ENCODE measurements at regions of chr10 and their contacts with region 1.

Region 1: DNA sequence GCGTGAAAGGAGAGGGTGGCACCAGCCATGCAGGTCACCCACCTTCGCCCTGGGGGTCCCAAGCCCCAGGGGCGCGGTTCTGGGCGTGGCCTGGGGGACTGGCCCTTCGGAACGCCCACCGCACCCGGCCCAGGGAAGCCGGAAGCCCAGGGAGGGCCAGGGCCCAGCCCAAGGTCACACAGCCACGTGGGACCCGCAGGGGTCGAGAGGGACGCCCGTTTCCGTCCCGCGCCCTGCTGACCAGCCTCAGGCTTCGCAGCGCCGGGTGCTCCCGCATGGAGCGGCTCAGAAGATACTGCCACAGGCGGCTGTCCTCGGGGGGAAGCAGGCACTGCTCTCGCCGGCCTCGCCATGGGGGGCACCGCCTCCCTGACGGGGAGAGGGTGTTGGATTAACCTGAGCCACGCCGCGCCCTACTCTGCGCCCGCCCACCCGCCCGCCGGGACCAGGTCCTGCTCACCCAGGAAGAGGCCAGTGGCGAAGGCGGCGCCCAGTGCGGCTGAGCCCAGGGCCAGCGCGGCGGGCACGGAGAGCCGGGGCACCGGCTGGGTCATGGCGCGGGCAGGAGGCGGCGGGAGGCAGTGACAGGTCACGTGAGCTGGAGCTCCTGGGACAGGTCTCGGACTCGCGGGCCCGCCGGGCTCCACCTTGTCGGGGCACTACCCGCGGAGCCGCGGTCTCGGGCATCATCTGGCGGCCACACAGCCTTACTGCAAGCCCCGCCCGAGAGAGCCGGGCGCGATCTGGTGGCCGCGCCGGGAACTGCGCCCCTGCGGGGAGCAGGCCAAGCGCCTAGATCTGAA is at the start of gene COMTD1:
- DNase-seq: peak; percentile 96
- H3K4me3 Mint-ChIP-seq: peak within 1 kb of the TSS; percentile 82
- H3K27ac Mint-ChIP-seq: peak within 1 kb of the TSS; percentile 72
- H3K4me1 Mint-ChIP-seq: peaks cover 32% of the 10 kb centered on the region
- H3K27me3 Mint-ChIP-seq: no peaks in the 10 kb centered on the region
- total RNA-seq, gene COMTD1: 34.2 to 34.8 TPM

Region 2: DNA sequence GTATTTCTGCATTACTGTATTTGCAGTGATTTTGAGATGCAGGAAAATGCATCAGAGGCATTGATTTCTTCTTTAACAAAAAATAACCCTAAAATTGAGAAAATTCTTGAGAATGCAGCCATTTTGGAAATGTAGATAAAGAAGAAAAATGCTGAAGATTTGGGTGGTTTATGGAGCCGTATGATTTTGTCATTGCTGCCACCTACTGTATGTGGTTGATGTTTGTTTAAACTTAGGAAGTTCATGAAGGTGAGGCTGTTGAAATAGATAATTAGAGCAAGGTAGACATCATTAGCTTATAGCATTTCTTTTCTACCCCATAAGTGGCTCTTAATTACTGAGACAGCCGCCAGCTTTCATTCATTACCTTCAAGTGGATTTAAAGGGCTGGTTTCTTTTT is 216.2 kb before region 1 on chr10:
- CTCF ChIA-PET with region 1: interaction called, 20 read pairs
- POLR2A ChIA-PET with region 1: interaction called, 3 read pairs
- DNase-seq: no peak
- H3K4me3 Mint-ChIP-seq: no peak overlapping the region
- H3K27ac Mint-ChIP-seq: no peak overlapping the region
- H3K4me1 Mint-ChIP-seq: peaks cover 26% of the 10 kb centered on the region
- H3K27me3 Mint-ChIP-seq: no peaks in the 10 kb centered on the region

Region 3: GRCh38 chr10:75057680-75058079 is 177.9 kb before region 1 on chr10:
- CTCF ChIA-PET with region 1: no interaction called
- POLR2A ChIA-PET with region 1: no interaction called
- DNase-seq: no peak
- H3K4me3 Mint-ChIP-seq: no peak overlapping the region
- H3K27ac Mint-ChIP-seq: no peak overlapping the region
- H3K4me1 Mint-ChIP-seq: peaks cover 11% of the 10 kb centered on the region
- H3K27me3 Mint-ChIP-seq: no peaks in the 10 kb centered on the region

Region 4: DNA sequence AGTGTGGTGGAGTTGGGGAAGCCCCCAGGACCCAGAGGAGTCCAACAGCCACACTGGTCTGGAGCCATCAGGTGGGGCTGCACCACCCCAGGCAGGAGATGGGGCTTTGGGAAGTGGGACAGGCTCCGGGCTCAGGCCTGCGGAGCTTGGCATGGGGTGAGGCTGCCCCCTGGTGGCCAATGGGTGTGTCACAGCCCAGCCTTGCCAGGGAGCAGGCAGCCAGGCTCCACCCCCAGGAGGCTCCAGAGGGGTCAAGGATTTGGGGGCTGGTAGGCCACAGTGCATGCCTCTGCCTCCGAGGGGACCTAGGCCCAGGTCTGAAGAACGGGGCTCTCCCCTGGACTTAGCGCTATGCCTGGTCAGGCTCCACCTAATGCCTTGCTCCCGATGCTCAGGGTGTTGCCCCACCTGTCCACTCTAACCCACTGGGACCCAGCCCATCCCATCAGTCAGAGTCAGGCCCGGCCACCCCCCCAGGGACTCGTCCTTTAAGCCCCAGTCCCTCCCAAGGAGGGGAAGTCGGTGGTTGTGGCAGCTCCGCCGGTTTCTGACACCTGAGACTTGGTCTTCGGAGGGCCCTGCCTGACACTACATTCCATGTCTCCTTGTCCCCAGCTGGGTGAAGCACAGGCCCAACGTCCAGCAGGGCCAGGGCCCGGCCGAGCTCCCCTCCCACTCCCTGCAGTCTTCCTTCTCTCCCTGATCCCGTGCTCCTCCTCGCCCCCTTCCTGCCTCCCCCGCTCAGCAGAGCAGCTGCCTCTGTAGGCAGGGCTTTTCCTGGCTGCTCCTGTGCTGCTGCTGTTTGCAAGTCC is 135.4 kb before region 1 on chr10:
- CTCF ChIA-PET with region 1: interaction called, 13 read pairs
- POLR2A ChIA-PET with region 1: no interaction called
- DNase-seq: peak; percentile 83
- H3K4me3 Mint-ChIP-seq: no peak overlapping the region
- H3K27ac Mint-ChIP-seq: no peak overlapping the region
- H3K4me1 Mint-ChIP-seq: no peaks in the 10 kb centered on the region
- H3K27me3 Mint-ChIP-seq: no peaks in the 10 kb centered on the region

Region 5: GRCh38 chr10:75111367-75111906 is 124.1 kb before region 1 on chr10 and contains the start of gene SAMD8:
- CTCF ChIA-PET with region 1: interaction called, 24 read pairs
- POLR2A ChIA-PET with region 1: interaction called, 17 read pairs
- DNase-seq: peak; percentile 98
- H3K4me3 Mint-ChIP-seq: peak within 1 kb of the TSS; percentile 80
- H3K27ac Mint-ChIP-seq: peak within 1 kb of the TSS; percentile 86
- H3K4me1 Mint-ChIP-seq: peaks cover 51% of the 10 kb centered on the region
- H3K27me3 Mint-ChIP-seq: no peaks in the 10 kb centered on the region
- total RNA-seq, gene SAMD8: 13.9 to 14.1 TPM

Region 6: GRCh38 chr10:75187961-75188426 is 47.6 kb before region 1 on chr10:
- CTCF ChIA-PET with region 1: interaction called, 215 read pairs
- POLR2A ChIA-PET with region 1: interaction called, 14 read pairs
- DNase-seq: peak; percentile 74
- H3K4me3 Mint-ChIP-seq: no peak overlapping the region
- H3K27ac Mint-ChIP-seq: no peak overlapping the region
- H3K4me1 Mint-ChIP-seq: peaks cover 11% of the 10 kb centered on the region
- H3K27me3 Mint-ChIP-seq: no peaks in the 10 kb centered on the region

Region 7: GRCh38 chr10:75195035-75195763 is 40.4 kb before region 1 on chr10:
- CTCF ChIA-PET with region 1: interaction called, 215 read pairs
- POLR2A ChIA-PET with region 1: interaction called, 6 read pairs
- DNase-seq: no peak
- H3K4me3 Mint-ChIP-seq: no peak overlapping the region
- H3K27ac Mint-ChIP-seq: no peak overlapping the region
- H3K4me1 Mint-ChIP-seq: no peaks in the 10 kb centered on the region
- H3K27me3 Mint-ChIP-seq: no peaks in the 10 kb centered on the region

Region 8: DNA sequence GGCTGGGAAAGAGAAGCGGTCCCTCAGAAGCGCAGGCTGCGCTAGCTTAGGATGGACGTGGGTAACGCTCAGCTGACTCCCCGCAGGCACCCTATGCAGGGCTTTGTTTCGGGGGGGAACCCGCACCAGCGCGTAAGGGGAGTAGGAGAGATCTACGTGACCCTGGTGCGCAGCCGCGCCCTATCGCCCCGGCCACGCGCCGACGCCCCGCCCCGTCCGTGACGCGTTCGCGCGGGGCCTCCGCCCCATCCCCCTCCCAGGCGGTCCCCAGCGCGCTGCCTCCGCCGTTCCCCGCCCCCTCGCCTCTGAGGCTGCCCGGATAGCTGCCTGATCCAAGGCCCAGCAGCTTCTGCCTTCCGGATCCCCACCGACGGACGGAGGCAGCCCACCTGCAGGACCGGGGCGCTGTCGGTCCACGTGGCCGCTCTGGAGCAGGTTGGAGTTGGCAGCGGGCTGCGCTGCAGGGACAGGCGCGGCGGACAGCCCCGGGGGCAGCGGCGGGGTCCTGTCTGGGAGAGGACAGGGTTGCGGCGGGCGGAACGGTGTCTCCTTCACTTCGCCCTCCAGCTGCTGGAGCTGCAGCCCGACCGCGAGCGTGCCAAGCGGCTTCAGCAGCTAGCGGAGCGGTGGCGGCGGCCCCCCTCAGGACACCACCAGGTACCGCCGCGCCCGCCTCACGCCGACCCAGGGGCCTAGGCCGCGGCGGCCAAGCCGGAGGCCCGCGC is 25.1 kb before region 1 on chr10 and contains the start of gene VDAC2:
- CTCF ChIA-PET with region 1: interaction called, 130 read pairs
- POLR2A ChIA-PET with region 1: interaction called, 193 read pairs
- DNase-seq: peak; percentile 94
- H3K4me3 Mint-ChIP-seq: peak within 1 kb of the TSS; percentile 94
- H3K27ac Mint-ChIP-seq: peak within 1 kb of the TSS; percentile 100
- H3K4me1 Mint-ChIP-seq: peaks cover 42% of the 10 kb centered on the region
- H3K27me3 Mint-ChIP-seq: no peaks in the 10 kb centered on the region
- total RNA-seq, gene VDAC2: 128 to 133 TPM

Region 9: DNA sequence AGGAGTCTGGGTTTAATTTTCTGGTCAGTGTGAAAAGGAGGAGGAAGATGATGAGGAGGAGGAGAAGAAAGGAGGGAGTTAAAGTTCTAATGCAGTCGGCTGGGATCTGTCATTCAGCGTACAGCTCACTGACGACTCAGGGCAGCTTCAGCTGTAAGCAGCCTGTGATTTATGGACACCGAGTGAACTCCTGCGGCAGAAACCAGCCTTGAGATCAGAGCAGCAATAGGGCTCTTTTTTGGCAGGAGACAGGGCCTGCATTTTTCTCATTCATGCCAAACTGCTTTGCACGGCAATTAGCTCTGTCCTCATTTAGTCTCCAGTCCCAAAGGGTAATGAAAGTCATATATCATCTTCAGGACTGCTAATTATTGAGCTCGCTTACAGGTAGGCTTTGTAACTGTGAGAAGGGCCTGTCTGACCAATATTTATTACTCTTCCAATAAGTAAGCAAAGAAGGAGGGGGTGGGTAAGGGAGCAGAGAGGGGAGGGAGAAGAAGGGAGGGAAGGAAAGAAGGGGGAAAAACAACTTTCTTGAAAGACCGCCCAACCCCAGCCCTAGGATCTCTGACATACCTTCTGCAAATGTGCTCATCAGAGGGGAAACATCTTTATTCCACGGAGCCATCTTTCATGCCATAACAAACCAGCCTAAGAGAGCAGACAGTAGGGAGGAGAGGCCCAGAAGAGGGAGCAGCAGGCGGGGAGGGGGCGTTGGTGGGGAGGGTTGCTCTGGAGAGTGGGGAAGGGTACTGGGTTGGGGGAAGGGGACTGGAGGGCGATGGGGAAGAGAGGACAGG is 48.3 kb after region 1 on chr10:
- CTCF ChIA-PET with region 1: no interaction called
- POLR2A ChIA-PET with region 1: no interaction called
- DNase-seq: no peak
- H3K4me3 Mint-ChIP-seq: no peak overlapping the region
- H3K27ac Mint-ChIP-seq: no peak overlapping the region
- H3K4me1 Mint-ChIP-seq: no peaks in the 10 kb centered on the region
- H3K27me3 Mint-ChIP-seq: peaks cover 22% of the 10 kb centered on the region

Measured in activated CD4-positive, alpha-beta memory T cell treated with anti-CD3 and anti-CD28 coated beads, Interleukin-2, amount 10 ng/mL, durations not matched to agents 7 days and 5 days (primary cell).